Testis (tissue), 5 donors: ENCODE measurements at regions of chr21 and their contacts with region 1.

Region 1: DNA sequence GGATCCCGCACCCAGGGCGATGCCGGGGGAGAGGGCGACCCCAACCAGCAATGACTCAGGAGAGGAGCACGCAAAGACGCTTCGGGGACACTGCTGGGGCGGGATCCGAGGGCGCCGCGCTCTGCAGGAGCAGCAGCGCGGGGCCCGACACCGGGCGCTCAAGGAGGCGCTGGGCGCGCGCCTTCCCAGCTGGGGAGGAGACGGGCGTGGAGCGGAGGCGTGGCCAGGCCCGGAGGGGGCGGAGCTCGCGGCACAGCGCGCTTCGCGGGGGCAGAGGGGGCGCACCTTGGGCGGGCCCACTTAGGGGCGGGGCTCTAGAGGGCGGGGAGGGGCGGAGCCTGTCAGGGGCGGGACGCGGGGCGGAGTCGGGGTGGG is 369 bp downstream of the SUMO3 start:
- DNase-seq: peak; percentile 92
- H3K4me3 ChIP-seq: peak overlapping the region; percentile 83
- H3K27ac ChIP-seq: peak overlapping the region in 1 of 2 donors; percentile 93
- H3K4me1 ChIP-seq: peaks cover 12% of the 10 kb centered on the region
- H3K27me3 ChIP-seq: no peaks in the 10 kb centered on the region
- CTCF ChIP-seq: no peak
- POLR2A ChIP-seq: no peak

Region 2: DNA sequence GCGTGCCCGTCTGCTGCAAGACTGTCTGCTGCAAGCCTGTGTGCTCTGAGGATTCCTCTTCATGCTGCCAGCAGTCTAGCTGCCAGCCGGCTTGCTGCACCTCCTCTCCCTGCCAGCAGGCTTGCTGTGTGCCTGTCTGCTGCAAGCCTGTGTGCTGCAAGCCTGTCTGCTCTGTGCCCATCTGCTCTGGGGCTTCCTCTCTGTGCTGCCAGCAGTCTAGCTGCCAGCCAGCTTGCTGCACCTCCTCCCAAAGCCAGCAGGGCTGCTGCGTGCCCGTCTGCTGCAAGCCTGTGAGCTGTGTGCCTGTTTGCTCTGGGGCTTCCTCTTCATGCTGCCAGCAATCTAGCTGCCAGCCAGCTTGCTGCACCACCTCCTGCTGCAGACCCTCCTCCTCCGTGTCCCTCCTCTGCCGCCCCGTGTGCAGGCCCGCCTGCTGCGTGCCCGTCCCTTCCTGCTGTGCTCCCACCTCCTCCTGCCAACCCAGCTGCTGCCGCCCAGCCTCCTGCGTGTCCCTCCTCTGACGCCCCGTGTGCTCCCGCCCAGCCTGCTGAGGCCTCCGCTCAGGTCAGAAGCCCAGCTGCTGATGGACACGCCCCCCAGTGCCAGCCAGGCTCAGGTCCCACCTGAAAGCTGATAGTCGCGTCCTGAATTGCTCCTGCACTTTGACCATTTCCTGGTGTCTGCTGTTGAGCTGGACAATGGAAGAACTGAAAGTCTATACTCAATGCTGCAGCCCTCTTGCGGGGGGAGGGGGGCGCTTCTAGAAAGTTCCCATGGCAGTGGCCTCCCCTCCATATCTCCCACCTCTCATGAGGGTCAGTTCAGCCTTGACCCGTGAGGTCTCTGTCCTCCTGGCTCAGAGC is 242.8 kb before region 1 on chr21:
- intact Hi-C with region 1: no loop called
- DNase-seq: no peak
- H3K4me3 ChIP-seq: no peak overlapping the region
- H3K27ac ChIP-seq: no peak overlapping the region
- H3K4me1 ChIP-seq: no peaks in the 10 kb centered on the region
- H3K27me3 ChIP-seq: no peaks in the 10 kb centered on the region
- CTCF ChIP-seq: no peak
- POLR2A ChIP-seq: no peak

Region 3: GRCh38 chr21:44618504-44618903 is 199.0 kb before region 1 on chr21:
- intact Hi-C with region 1: no loop called
- DNase-seq: no peak
- H3K4me3 ChIP-seq: no peak overlapping the region
- H3K27ac ChIP-seq: no peak overlapping the region
- H3K4me1 ChIP-seq: no peaks in the 10 kb centered on the region
- H3K27me3 ChIP-seq: no peaks in the 10 kb centered on the region
- CTCF ChIP-seq: no peak
- POLR2A ChIP-seq: no peak

Region 4: DNA sequence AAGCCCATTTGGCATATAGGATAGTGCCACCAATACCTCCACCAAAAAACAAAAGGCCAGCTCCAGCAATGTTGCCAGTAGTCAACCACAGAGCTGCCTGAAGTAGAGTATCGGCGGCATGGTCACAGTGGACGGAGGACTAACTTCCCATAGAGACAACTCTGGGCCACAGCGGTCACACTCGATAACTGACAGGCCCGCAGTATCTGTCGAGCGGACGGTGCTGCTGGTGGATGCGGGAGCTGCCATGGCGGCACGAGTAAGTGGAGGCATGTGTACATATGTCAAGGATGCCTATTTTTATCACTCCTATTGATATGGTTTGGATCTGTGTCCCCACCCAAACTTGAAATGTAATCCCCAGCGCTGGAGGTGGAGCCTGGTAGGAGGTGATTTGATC is 139.6 kb before region 1 on chr21:
- intact Hi-C with region 1: no loop called
- DNase-seq: no peak
- H3K4me3 ChIP-seq: no peak overlapping the region
- H3K27ac ChIP-seq: no peak overlapping the region
- H3K4me1 ChIP-seq: no peaks in the 10 kb centered on the region
- H3K27me3 ChIP-seq: no peaks in the 10 kb centered on the region
- CTCF ChIP-seq: no peak
- POLR2A ChIP-seq: no peak

Region 5: DNA sequence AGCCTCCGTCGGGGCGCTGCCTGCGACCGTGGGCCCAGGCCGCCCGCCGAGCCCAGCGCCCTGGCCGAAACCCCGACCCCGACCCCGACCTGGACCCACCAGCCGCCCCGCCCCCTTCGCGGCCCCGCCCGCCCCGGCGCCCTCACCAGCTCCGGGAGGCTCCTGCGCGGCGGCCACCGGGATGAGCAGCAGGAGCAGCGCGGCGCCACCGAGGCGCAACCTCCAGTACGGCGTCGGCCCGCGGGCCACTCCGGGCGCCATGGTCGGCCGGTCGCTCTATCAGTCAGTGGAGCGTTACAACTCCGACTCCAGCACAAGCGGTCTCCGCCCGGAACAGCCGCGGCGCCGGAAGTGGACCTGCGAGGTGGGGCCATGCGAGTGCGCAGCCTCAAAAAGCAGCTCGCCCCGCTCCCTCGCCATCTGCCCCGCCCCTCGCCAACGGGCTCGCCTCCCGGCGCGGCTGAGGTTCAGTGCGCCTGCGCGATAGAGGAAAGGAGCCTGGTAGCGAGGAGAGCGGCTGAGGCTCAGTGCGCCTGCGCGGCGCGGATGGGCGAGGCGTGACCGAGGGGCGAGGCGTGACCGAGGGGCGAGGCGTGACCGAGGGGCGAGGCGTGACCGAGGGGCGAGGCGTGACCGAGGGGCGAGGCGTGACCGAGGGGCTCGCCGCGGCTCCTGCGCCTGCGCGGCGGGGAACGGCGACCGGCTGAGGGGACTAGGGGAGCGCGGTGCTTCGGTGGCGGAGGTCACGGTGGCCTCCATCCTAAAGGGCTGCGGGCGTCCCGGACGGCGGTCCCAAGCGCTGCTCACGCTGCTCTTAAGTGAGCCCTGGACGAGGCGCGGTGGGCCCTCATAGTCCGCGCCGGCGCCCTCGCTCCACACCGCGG is 56.1 kb after region 1 on chr21 and contains the start of gene PTTG1IP:
- intact Hi-C with region 1: loop called (anchors 5 kb)
- DNase-seq: peak; percentile 97
- H3K4me3 ChIP-seq: peak within 1 kb of the TSS; percentile 92 to 97
- H3K27ac ChIP-seq: peak within 1 kb of the TSS; percentile 73 to 98
- H3K4me1 ChIP-seq: peaks cover 41% of the 10 kb centered on the region
- H3K27me3 ChIP-seq: no peaks in the 10 kb centered on the region
- CTCF ChIP-seq: no peak
- POLR2A ChIP-seq: peak; percentile 52
- total RNA-seq, gene PTTG1IP: 190 to 195 TPM

Region 6: GRCh38 chr21:44939532-44940115 is 122.1 kb after region 1 on chr21 and contains the start of gene SLX9:
- intact Hi-C with region 1: loop called (anchors 10 kb)
- DNase-seq: peak; percentile 76
- H3K4me3 ChIP-seq: peak within 1 kb of the TSS; percentile 84 to 89
- H3K27ac ChIP-seq: peak within 1 kb of the TSS in 1 of 2 donors; percentile 68
- H3K4me1 ChIP-seq: peaks cover 11% of the 10 kb centered on the region
- H3K27me3 ChIP-seq: no peaks in the 10 kb centered on the region
- CTCF ChIP-seq: no peak
- POLR2A ChIP-seq: no peak
- total RNA-seq, gene SLX9: 30.8 to 31.9 TPM